ENCODE measurements at regions of chr19 and their contacts with region 1.

Region 1: DNA sequence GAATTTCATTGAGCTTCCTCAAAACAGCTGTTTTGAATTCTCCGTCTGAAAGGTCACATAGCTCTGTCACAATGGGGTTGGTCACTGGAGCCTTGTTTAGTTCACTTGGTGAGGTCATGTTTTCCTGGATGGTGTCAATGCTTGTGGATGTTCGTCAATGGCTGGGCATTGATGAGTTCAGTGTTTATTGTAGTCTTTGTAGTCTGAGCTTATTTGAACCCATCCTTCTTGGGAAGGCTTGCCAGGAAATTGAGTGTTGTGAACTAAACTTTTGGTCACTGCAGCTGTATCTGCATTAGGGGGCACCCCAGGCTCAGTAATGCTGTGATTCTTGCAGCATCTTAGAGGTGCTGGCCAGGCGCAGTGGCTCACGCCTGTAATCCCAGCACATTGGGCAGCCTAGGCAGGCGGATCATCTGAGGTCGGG is 22.0 kb downstream of the BLOC1S3 start:
- DNase-seq: peak in 1 of 4 donors; percentile 30
- ATAC-seq: peak; percentile 41
- H3K4me3 ChIP-seq: no peak overlapping the region
- H3K27ac ChIP-seq: no peak overlapping the region
- H3K4me1 ChIP-seq: no peaks in the 10 kb centered on the region
- H3K27me3 ChIP-seq: no peaks in the 10 kb centered on the region
- CTCF ChIP-seq: no peak

Region 2: GRCh38 chr19:45245334-45245787 is 44.8 kb after region 1 on chr19 and contains the start of gene EXOC3L2:
- intact Hi-C with region 1: loop called in 1 of 2 experiments (anchors 5 kb)
- DNase-seq: no peak
- ATAC-seq: no peak
- H3K4me3 ChIP-seq: peak within 1 kb of the TSS in 1 of 2 donors; percentile 21
- H3K27ac ChIP-seq: peak within 1 kb of the TSS; percentile 33 to 41
- H3K4me1 ChIP-seq: peaks cover 2 to 11% of the 10 kb centered on the region in 2 donors
- H3K27me3 ChIP-seq: no peaks in the 10 kb centered on the region
- CTCF ChIP-seq: no peak
- polyA plus RNA-seq, gene EXOC3L2: 0.85 to 2.4 (median 1.1) TPM

Region 3: GRCh38 chr19:45352914-45353796 is 152.6 kb after region 1 on chr19:
- intact Hi-C with region 1: loop called in 1 of 2 experiments (anchors 10 kb)
- DNase-seq: no peak
- ATAC-seq: no peak
- H3K4me3 ChIP-seq: no peak overlapping the region
- H3K27ac ChIP-seq: no peak overlapping the region
- H3K4me1 ChIP-seq: no peaks in the 10 kb centered on the region
- H3K27me3 ChIP-seq: peaks cover 0 to 5% of the 10 kb centered on the region in 2 donors
- CTCF ChIP-seq: no peak

Measured in left lung (tissue), 14 donors.